Naive thymus-derived CD4-positive, alpha-beta T cell (primary cell): ENCODE measurements at regions of chr22 and their contacts with region 1.

Region 1: GRCh38 chr22:44701824-44702478 is at the start of gene PRR5:
- DNase-seq: peak; percentile 73 to 85 (median 81)
- ATAC-seq: peak; percentile 94
- H3K4me3 ChIP-seq: peak within 1 kb of the TSS; percentile 64
- H3K4me3 Mint-ChIP-seq: peak within 1 kb of the TSS; percentile 72 to 83 (median 78)
- H3K27ac ChIP-seq: peak within 1 kb of the TSS; percentile 68
- H3K27ac Mint-ChIP-seq: peak within 1 kb of the TSS; percentile 74 to 91 (median 83)
- H3K4me1 ChIP-seq: peaks cover 21 to 23% of the 10 kb centered on the region in 2 donors
- H3K4me1 Mint-ChIP-seq: peaks cover 5 to 31% (median 17%) of the 10 kb centered on the region in 7 donors
- H3K27me3 ChIP-seq: no peaks in the 10 kb centered on the region
- H3K27me3 Mint-ChIP-seq: peaks cover 0 to 9% (median 0%) of the 10 kb centered on the region in 5 donors
- total RNA-seq, gene PRR5: 19.6 to 49.1 (median 44.4) TPM

Region 2: DNA sequence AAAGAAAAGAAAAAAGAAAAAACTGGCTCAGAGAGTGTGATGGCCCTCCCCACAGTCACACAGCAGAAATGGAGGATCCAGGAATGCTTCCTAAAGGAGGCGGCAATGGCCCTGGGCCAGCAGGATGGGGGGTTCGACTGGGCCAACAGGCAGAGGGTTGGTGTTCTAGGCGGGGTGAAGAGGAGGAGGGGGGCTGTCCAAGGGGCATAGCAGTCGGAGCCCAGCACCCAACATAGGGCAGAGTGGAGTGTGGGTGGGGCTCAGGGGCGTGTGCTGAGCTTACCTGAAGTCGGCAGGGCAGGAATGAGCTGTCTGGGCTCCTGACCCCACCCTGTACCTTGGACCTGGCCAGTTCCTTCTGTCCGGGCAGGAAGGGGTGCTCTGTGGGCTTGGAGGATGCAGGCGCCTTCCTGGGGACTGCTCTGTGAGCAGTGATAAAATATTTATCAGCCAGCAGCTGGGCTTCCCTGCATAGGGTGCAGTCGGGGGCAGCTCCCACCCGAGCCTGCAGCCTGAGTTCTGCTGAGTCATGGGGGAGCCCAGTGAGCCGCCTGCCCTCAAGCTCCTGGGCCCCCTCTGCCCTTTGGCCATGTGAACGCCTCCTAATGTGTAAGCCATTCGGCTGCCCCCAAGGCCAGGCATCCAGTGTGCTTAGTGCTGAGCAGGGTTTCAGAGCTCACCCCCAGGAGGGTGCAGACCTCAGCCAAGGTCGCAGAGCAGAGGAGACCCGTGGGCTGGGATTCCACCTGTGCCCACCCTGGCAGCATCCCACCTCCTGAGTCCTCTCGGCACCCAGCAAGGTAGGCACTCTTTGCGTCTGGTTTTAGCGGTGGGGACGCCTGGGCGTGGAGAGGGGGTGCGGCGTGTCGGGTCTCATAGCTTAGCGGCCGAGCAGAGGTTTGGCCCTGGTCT is 25.3 kb before region 1 on chr22:
- CTCF ChIA-PET with region 1: no interaction called
- POLR2A ChIA-PET with region 1: no interaction called
- intact Hi-C with region 1: no loop called
- DNase-seq: no peak
- ATAC-seq: peak; percentile 29
- H3K4me3 ChIP-seq: no peak overlapping the region
- H3K4me3 Mint-ChIP-seq: peak overlapping the region; percentile 27 to 76 (median 58)
- H3K27ac ChIP-seq: no peak overlapping the region
- H3K27ac Mint-ChIP-seq: peak overlapping the region in 3 of 9 donors; percentile 13 to 59 (median 30)
- H3K4me1 ChIP-seq: peaks cover 0 to 14% of the 10 kb centered on the region in 2 donors
- H3K4me1 Mint-ChIP-seq: peaks cover 11 to 44% (median 36%) of the 10 kb centered on the region in 7 donors
- H3K27me3 ChIP-seq: no peaks in the 10 kb centered on the region
- H3K27me3 Mint-ChIP-seq: peaks cover 0 to 10% (median 0%) of the 10 kb centered on the region in 5 donors

Region 3: DNA sequence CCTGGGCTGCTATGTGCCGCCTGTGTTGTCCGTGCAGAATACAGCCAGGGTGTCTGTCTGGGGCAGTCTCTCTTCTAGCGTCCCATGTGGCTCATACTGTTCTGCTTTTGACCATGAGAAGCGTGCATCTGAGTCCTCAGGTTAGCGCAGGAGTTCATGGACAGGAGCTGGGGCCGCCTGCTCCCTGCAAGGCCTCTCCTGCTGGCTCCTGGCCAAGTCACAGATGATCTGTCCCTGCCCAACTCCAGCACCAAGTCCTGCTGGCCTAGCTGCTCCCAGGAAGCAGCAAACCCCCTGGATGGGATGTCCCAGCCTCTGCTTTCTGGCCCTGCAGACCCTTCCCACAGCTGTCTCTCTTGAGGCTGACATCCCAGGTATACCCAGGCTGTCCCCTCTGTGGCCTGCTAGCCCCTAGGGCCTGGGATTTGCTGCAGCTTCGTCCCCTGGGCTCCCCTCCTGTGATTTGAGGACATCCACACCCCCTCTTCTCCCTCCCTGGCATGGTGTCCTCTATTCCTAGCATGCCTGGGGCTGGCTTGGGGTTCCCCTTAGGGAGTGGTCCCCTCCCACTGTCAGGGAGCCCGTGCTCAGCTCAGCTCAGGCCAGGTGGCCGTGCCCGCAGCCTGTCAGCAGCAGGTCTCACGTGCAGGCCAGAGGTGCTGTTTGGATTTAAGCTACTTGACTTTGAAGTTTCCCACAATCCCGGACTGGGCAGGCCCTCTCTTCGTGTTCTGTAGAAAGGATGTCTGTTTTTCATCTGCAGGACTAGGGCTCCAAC is 17.8 kb after region 1 on chr22:
- CTCF ChIA-PET with region 1: no interaction called
- POLR2A ChIA-PET with region 1: no interaction called
- intact Hi-C with region 1: no loop called
- DNase-seq: no peak
- ATAC-seq: no peak
- H3K4me3 ChIP-seq: no peak overlapping the region
- H3K4me3 Mint-ChIP-seq: no peak overlapping the region
- H3K27ac ChIP-seq: no peak overlapping the region
- H3K27ac Mint-ChIP-seq: no peak overlapping the region
- H3K4me1 ChIP-seq: no peaks in the 10 kb centered on the region
- H3K4me1 Mint-ChIP-seq: peaks cover 0 to 7% (median 0%) of the 10 kb centered on the region in 7 donors
- H3K27me3 ChIP-seq: no peaks in the 10 kb centered on the region
- H3K27me3 Mint-ChIP-seq: no peaks in the 10 kb centered on the region

Region 4: GRCh38 chr22:44735540-44736488 is 33.9 kb after region 1 on chr22:
- CTCF ChIA-PET with region 1: interaction called, 16 read pairs
- POLR2A ChIA-PET with region 1: no interaction called
- intact Hi-C with region 1: loop called (anchors 1 kb)
- DNase-seq: peak; percentile 53 to 88 (median 76)
- ATAC-seq: peak; percentile 85
- H3K4me3 ChIP-seq: no peak overlapping the region
- H3K4me3 Mint-ChIP-seq: no peak overlapping the region
- H3K27ac ChIP-seq: no peak overlapping the region
- H3K27ac Mint-ChIP-seq: peak overlapping the region in 1 of 9 donors; percentile 81
- H3K4me1 ChIP-seq: no peaks in the 10 kb centered on the region
- H3K4me1 Mint-ChIP-seq: peaks cover 0 to 7% (median 0%) of the 10 kb centered on the region in 7 donors
- H3K27me3 ChIP-seq: no peaks in the 10 kb centered on the region
- H3K27me3 Mint-ChIP-seq: no peaks in the 10 kb centered on the region

Region 5: DNA sequence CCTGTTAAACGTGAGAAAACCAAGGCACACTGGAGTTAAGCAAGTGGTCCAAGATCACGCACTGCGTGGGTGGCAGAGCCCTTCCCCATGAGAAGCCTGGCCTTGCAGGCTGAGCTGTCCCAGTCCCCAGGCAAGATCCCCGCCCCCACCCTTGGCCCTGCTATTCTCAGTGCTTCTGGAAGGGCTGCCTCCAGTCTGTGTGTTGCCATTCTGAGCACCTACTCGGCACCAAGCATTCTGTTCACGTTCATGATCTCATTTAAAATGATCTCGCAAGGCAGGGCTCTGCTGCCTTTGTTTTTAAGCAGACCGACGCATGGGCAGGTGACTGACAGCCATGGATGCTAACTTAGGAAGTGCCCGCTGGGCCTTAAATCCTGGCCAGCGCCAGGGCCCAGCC is 245.1 kb after region 1 on chr22:
- CTCF ChIA-PET with region 1: no interaction called
- POLR2A ChIA-PET with region 1: no interaction called
- intact Hi-C with region 1: no loop called
- DNase-seq: no peak
- ATAC-seq: no peak
- H3K4me3 ChIP-seq: no peak overlapping the region
- H3K4me3 Mint-ChIP-seq: no peak overlapping the region
- H3K27ac ChIP-seq: no peak overlapping the region
- H3K27ac Mint-ChIP-seq: no peak overlapping the region
- H3K4me1 ChIP-seq: no peaks in the 10 kb centered on the region
- H3K4me1 Mint-ChIP-seq: no peaks in the 10 kb centered on the region
- H3K27me3 ChIP-seq: no peaks in the 10 kb centered on the region
- H3K27me3 Mint-ChIP-seq: peaks cover 0 to 8% (median 0%) of the 10 kb centered on the region in 5 donors